HCT116 (cell line): ENCODE measurements at regions of chr19 and their contacts with region 1.

Region 1: DNA sequence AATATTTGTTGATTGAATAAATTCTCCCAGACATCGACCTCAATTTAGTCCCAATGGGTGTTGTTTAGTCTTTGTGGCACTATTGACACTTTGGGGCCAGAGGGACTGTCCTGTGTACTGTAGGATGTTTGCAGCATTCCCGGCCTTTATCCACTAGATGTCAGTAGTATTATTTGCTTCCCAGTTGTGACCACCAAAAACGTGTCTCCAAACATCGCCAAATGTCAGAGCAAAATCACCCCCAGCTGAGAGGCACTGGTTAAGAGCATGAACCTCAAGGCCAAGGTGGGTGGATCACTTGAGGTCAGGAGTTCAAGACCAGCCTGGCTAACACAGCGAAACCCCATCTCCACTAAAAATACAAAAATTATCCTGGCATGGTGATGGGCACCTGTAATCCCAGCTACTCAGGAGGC is 15.4 kb downstream of the NLRP12 start:
- DNase-seq: peak; percentile 45
- ATAC-seq: peak; percentile 90
- H3K4me3 ChIP-seq: no peak overlapping the region
- H3K27ac ChIP-seq: no peak overlapping the region
- H3K4me1 ChIP-seq: no peaks in the 10 kb centered on the region
- H3K27me3 ChIP-seq: no peaks in the 10 kb centered on the region
- CTCF ChIP-seq: peak; percentile 66 to 71 (median 67); a peak in 5 of 6 replicates
- POLR2A ChIP-seq: no peak
- RAD21 ChIP-seq: peak; percentile 87

Region 2: DNA sequence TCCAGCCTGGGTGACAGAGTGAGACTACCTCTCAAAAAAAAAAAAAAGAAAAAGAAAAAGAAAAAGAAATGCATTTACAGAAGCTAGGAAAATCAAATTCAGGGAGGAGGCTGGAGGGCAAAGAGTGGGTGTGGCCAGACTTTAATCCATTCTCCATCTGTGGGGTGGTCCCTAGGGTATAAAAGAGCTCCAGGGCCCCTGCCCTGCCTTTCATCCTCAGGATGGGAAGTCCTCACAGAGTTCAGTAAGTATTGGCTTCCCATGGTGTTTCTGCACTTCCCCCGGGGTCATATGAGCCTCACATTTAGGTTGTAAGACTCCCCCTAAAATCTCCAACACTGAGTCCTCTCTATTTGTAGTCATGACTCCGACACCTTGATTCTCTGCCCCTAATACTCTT is 144.0 kb before region 1 on chr19:
- CTCF ChIA-PET with region 1: no interaction called
- POLR2A ChIA-PET with region 1: no interaction called
- RAD21 ChIA-PET with region 1: no interaction called
- intact Hi-C with region 1: no loop called
- DNase-seq: no peak
- ATAC-seq: no peak
- H3K4me3 ChIP-seq: no peak overlapping the region
- H3K27ac ChIP-seq: no peak overlapping the region
- H3K4me1 ChIP-seq: no peaks in the 10 kb centered on the region
- H3K27me3 ChIP-seq: no peaks in the 10 kb centered on the region
- CTCF ChIP-seq: no peak
- POLR2A ChIP-seq: no peak
- RAD21 ChIP-seq: no peak

Region 3: DNA sequence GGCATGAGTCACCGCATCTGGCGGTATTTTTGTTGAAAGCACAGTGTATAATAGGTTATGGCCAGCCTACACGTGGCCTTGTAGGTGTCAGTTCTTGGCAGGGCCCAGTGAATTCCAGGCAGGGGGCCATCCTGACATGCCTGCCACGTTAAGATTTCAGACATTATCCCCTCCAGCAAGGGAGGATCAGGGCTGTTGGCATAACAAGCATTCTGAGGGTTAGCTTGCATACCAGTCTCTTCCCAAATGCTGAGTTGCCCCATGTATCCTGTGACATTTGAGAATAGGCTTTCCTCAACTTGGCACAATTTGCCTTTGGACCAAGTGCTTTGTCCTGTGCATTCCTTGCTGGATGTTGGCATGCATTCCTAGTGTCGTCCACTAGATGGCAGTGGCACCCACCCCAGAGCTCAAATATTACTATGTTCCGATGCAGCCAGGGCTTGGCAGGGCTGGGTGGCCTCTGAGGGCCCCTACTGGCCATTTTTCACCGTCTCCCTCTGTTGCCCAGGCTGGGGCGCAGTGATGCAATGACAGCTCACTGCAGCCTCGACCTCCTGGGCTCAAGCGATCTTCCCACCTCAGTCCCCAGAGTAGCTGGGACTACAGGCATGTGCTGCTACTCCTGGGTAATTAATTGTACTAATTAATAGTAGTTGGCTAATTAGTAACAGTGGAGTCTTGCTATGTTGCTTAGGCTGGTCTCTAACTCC is 15.8 kb before region 1 on chr19:
- CTCF ChIA-PET with region 1: interaction called, 23 read pairs
- POLR2A ChIA-PET with region 1: no interaction called
- RAD21 ChIA-PET with region 1: interaction called in 1 of 2 experiments, 3 read pairs
- intact Hi-C with region 1: no loop called
- DNase-seq: peak; percentile 82
- ATAC-seq: peak; percentile 100
- H3K4me3 ChIP-seq: no peak overlapping the region
- H3K27ac ChIP-seq: no peak overlapping the region
- H3K4me1 ChIP-seq: no peaks in the 10 kb centered on the region
- H3K27me3 ChIP-seq: no peaks in the 10 kb centered on the region
- CTCF ChIP-seq: peak; percentile 99
- POLR2A ChIP-seq: no peak
- RAD21 ChIP-seq: peak; percentile 90

Region 4: DNA sequence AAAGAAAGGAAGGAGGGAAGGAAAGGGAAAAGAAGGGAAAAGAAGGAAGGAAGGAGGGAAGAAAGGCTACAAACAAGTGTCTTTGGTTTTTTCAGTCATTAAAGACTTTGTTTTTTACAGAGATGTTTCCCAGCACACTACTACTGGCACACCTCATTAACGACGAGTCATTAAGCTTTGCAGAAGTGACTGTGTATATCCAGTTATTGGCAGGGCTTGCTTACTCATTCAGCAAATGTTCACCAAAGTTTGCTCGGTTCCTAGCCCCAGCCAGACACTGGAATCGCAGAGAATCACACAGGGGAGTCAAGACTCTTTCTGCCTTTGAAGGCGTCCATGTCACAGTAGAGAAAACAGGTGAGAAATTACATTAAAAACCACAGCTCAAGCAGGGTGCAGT is 11.1 kb after region 1 on chr19:
- CTCF ChIA-PET with region 1: interaction called, 13 read pairs
- POLR2A ChIA-PET with region 1: no interaction called
- RAD21 ChIA-PET with region 1: no interaction called
- intact Hi-C with region 1: no loop called
- DNase-seq: no peak
- ATAC-seq: no peak
- H3K4me3 ChIP-seq: no peak overlapping the region
- H3K27ac ChIP-seq: no peak overlapping the region
- H3K4me1 ChIP-seq: peaks cover 8 to 12% of the 10 kb centered on the region in 2 experiments; a peak in 3 of 4 replicates
- H3K27me3 ChIP-seq: no peaks in the 10 kb centered on the region
- CTCF ChIP-seq: no peak
- POLR2A ChIP-seq: no peak
- RAD21 ChIP-seq: no peak

Region 5: GRCh38 chr19:54029930-54030490 is 221.3 kb after region 1 on chr19:
- CTCF ChIA-PET with region 1: interaction called, 60 read pairs
- POLR2A ChIA-PET with region 1: no interaction called
- RAD21 ChIA-PET with region 1: interaction called, 3 to 10 read pairs
- intact Hi-C with region 1: loop called (anchors 1 kb)
- DNase-seq: peak; percentile 69
- ATAC-seq: peak; percentile 88
- H3K4me3 ChIP-seq: no peak overlapping the region
- H3K27ac ChIP-seq: no peak overlapping the region
- H3K4me1 ChIP-seq: peaks cover 0 to 3% of the 10 kb centered on the region in 2 experiments; a peak in 1 of 4 replicates
- H3K27me3 ChIP-seq: no peaks in the 10 kb centered on the region
- CTCF ChIP-seq: peak; percentile 66 to 73 (median 69); a peak in 5 of 6 replicates
- POLR2A ChIP-seq: no peak
- RAD21 ChIP-seq: peak; percentile 73

Region 6: GRCh38 chr19:54096617-54097129 is 288.0 kb after region 1 on chr19:
- CTCF ChIA-PET with region 1: no interaction called
- POLR2A ChIA-PET with region 1: no interaction called
- RAD21 ChIA-PET with region 1: no interaction called
- intact Hi-C with region 1: loop called (anchors 10 kb)
- DNase-seq: peak; percentile 19
- ATAC-seq: peak; percentile 70
- H3K4me3 ChIP-seq: peak overlapping the region; percentile 25 to 51; a peak in 3 of 4 replicates
- H3K27ac ChIP-seq: no peak overlapping the region; the same call in 1 of the 2 replicates
- H3K4me1 ChIP-seq: peaks cover 7 to 20% of the 10 kb centered on the region in 2 experiments; a peak in 3 of 4 replicates
- H3K27me3 ChIP-seq: no peaks in the 10 kb centered on the region
- CTCF ChIP-seq: peak in 1 of 3 experiments; percentile 39; a peak in 3 of 6 replicates
- POLR2A ChIP-seq: no peak
- RAD21 ChIP-seq: no peak

Region 7: GRCh38 chr19:54231077-54231931 is 422.6 kb after region 1 on chr19:
- CTCF ChIA-PET with region 1: interaction called, 3 read pairs
- POLR2A ChIA-PET with region 1: no interaction called
- RAD21 ChIA-PET with region 1: no interaction called
- intact Hi-C with region 1: loop called (anchors 1 kb)
- DNase-seq: peak; percentile 81
- ATAC-seq: peak; percentile 97
- H3K4me3 ChIP-seq: no peak overlapping the region
- H3K27ac ChIP-seq: no peak overlapping the region
- H3K4me1 ChIP-seq: peaks cover 5 to 15% of the 10 kb centered on the region in 2 experiments; a peak in 3 of 4 replicates
- H3K27me3 ChIP-seq: no peaks in the 10 kb centered on the region
- CTCF ChIP-seq: peak; percentile 98 to 100 (median 100)
- POLR2A ChIP-seq: no peak
- RAD21 ChIP-seq: peak; percentile 87